Dorsolateral prefrontal cortex (tissue), 120 donors: ENCODE measurements at regions of chr2 and their contacts with region 1.

Region 1: GRCh38 chr2:10097352-10098148 is 17.3 kb upstream of the CYS1 start:
- DNase-seq: peak; percentile 37 to 83 (median 64)
- H3K4me3 ChIP-seq: no peak overlapping the region
- H3K27ac ChIP-seq: no peak overlapping the region
- H3K27me3 ChIP-seq: peaks cover 0 to 20% (median 4%) of the 10 kb centered on the region in 45 donors
- CTCF ChIP-seq: peak; percentile 60 to 92 (median 83)

Region 2: DNA sequence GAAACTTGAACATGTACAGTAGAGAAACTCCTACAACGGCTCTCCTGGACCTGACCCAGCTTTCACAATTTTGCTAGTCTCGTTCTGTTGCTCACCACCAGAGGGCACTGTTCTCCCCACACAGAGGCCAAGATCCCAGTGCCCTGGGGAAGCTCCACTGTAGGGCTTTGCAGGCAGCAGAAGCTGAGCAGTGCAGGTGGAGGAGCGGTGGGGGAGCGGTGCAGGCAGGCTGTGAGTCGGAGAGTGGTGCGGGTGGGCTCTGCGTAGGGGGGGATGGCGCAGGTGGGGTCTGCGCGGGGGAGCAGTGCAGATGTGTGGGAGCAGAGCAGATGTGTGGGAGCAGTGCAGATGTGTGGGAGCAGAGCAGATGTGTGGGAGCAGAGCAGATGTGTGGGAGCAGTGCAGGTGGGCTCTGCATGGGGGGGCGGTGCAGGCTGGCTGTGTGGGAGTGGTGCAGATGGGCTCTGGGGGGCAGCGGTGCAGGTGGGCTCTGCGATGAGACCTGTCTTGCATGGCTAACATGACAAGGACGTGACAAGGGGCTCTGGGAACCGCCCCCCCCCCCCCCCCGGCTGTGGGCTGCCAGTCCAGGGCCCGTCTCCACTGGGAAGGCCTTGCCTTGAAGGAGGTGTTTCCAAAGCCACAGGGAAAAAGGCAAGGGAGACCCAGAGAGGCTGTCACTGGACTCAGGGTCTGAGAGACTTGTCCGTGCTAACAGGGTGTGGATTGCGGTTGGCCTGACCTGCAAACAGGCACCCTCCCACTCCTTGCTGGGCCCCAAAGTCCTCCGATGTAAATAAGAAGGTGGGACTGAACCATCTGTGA is 24.7 kb before region 1 on chr2:
- intact Hi-C with region 1: loop called in 1 of 2 experiments (anchors 1 kb)
- DNase-seq: peak; percentile 51 to 90 (median 78)
- H3K4me3 ChIP-seq: peak overlapping the region in 9 of 59 donors; percentile 5 to 28 (median 12)
- H3K27ac ChIP-seq: peak overlapping the region in 13 of 59 donors; percentile 6 to 80 (median 50)
- H3K27me3 ChIP-seq: peaks cover 0 to 30% (median 0%) of the 10 kb centered on the region in 45 donors
- CTCF ChIP-seq: peak; percentile 73 to 91 (median 84)